Spleen (tissue), 13 donors: ENCODE measurements at regions of chr6 and their contacts with region 1.

Region 1: GRCh38 chr6:133973109-133973971 is 20.3 kb downstream of the TBPL1 start:
- DNase-seq: no peak
- H3K4me3 ChIP-seq: no peak overlapping the region
- H3K27ac ChIP-seq: no peak overlapping the region
- H3K4me1 ChIP-seq: peaks cover 2 to 68% (median 28%) of the 10 kb centered on the region in 6 donors
- H3K27me3 ChIP-seq: no peaks in the 10 kb centered on the region
- CTCF ChIP-seq: peak; percentile 33 to 80 (median 74)
- POLR2A ChIP-seq: no peak

Region 2: DNA sequence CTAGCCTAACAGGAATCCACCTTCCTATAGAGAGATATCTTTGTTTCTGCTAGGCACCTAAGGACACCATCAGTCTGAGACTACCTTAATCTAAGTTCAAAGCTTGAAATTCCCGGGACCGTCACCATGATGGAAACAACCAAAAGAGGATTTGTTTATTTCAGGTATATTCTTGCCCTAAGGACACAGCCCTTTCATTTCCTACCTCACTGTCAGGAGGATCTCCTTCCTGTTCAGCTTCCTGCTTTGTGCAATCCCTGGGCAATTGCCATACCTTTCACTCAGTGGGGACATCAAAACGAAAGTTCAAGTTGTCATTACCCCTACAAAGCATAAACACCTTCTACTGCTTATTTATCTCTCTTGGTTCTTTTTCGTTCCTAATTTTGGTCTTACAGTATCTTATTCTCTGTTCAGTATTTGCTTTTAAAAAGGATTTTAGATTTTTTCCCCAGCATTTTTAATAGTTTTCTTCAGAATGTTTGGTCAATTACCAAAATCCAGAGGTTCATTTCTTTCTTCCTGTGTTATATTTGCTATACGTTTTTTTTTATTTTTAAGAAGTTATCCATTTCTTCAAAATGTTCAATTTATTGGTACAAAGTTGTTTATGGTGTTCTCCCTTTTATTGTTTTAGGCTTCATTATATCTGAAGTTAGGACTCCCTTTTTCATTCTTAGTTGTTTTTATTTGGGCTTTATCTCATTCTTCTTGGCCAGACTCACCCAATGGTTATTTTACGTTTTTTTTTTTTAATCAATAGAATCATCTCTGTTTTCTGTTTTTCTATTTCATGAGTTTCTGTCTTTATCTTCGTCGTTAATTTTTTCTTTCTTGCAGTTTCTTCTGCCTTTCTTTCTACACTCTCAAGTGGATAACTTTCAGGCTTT is 33.3 kb before region 1 on chr6:
- intact Hi-C with region 1: loop called (anchors 5 kb)
- DNase-seq: no peak
- H3K4me3 ChIP-seq: no peak overlapping the region
- H3K27ac ChIP-seq: no peak overlapping the region
- H3K4me1 ChIP-seq: peaks cover 0 to 4% (median 0%) of the 10 kb centered on the region in 6 donors
- H3K27me3 ChIP-seq: peaks cover 0 to 4% (median 0%) of the 10 kb centered on the region in 7 donors
- CTCF ChIP-seq: no peak
- POLR2A ChIP-seq: no peak

Region 3: GRCh38 chr6:134007077-134007476 is 33.7 kb after region 1 on chr6:
- intact Hi-C with region 1: no loop called
- DNase-seq: no peak
- H3K4me3 ChIP-seq: no peak overlapping the region
- H3K27ac ChIP-seq: no peak overlapping the region
- H3K4me1 ChIP-seq: no peaks in the 10 kb centered on the region
- H3K27me3 ChIP-seq: peaks cover 0 to 10% (median 0%) of the 10 kb centered on the region in 7 donors
- CTCF ChIP-seq: no peak
- POLR2A ChIP-seq: no peak

Region 4: GRCh38 chr6:134784336-134784735 is 811.0 kb after region 1 on chr6:
- intact Hi-C with region 1: no loop called
- DNase-seq: no peak
- H3K4me3 ChIP-seq: no peak overlapping the region
- H3K27ac ChIP-seq: no peak overlapping the region
- H3K4me1 ChIP-seq: no peaks in the 10 kb centered on the region
- H3K27me3 ChIP-seq: no peaks in the 10 kb centered on the region
- CTCF ChIP-seq: no peak
- POLR2A ChIP-seq: no peak